A549 (cell line): ENCODE measurements at regions of chr17 and their contacts with region 1.

Region 1: GRCh38 chr17:4004517-4005295 is 40.5 kb upstream of the ATP2A3 start:
- DNase-seq: peak; percentile 56 to 81
- ATAC-seq: peak; percentile 64 to 85; a peak in 5 of 6 replicates
- H3K4me3 ChIP-seq: no peak overlapping the region
- H3K27ac ChIP-seq: no peak overlapping the region
- H3K4me1 ChIP-seq: peaks cover 23% of the 10 kb centered on the region
- CTCF ChIP-seq: peak; percentile 95
- EP300 ChIP-seq: no peak
- POLR2A ChIP-seq: no peak
- RAD21 ChIP-seq: peak; percentile 89

Region 2: DNA sequence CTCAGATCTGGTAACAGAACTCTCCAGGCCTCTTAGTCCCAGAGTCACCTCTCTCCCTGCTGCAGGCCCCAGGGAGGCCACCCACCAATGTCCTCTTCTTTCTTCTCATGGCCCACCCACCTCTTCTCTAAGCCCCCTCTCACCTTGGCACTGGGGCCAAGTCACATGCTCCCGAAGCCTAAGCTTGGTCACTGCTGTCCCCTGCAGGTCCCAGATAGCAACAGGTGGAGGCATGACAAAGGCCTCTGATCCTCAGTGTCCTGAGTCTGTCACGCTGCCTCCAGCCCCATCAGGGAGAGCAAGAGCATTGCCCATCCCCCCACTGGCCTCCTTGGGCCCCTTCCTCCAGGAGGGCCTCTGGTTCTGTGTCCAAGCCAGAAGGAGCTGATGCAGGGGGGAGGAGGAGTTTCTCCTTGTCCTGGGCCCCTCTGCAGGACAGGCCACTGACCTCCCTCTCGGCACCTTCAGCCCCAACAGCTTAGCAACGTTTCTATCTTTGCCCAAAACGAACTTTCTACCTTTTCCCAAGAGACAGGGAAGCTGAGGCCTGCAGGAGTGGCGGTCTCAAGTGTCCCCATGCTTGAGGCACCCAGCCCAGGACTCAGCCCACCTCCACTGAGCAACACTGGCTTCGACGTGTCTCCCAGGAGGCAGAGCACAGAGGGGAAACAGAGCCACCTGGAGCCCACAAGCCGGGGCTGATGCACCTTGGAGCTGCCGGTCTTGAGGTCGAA is 97.1 kb before region 1 on chr17:
- CTCF ChIA-PET with region 1: interaction called, 166 read pairs
- POLR2A ChIA-PET with region 1: no interaction called
- DNase-seq: peak in 1 of 2 experiments; percentile 40
- ATAC-seq: peak; percentile 37 to 48; a peak in 4 of 6 replicates
- H3K4me3 ChIP-seq: no peak overlapping the region
- H3K27ac ChIP-seq: no peak overlapping the region
- H3K4me1 ChIP-seq: no peaks in the 10 kb centered on the region
- CTCF ChIP-seq: peak; percentile 52
- EP300 ChIP-seq: no peak
- POLR2A ChIP-seq: no peak
- RAD21 ChIP-seq: peak; percentile 72 to 83

Region 3: GRCh38 chr17:3946711-3947235 is 57.9 kb before region 1 on chr17:
- CTCF ChIA-PET with region 1: interaction called, 12 read pairs
- POLR2A ChIA-PET with region 1: no interaction called
- DNase-seq: no peak
- ATAC-seq: peak in 1 of 2 experiments; percentile 10; a peak in 1 of 6 replicates
- H3K4me3 ChIP-seq: no peak overlapping the region
- H3K27ac ChIP-seq: no peak overlapping the region
- H3K4me1 ChIP-seq: no peaks in the 10 kb centered on the region
- CTCF ChIP-seq: no peak
- EP300 ChIP-seq: no peak
- POLR2A ChIP-seq: no peak
- RAD21 ChIP-seq: no peak

Region 4: DNA sequence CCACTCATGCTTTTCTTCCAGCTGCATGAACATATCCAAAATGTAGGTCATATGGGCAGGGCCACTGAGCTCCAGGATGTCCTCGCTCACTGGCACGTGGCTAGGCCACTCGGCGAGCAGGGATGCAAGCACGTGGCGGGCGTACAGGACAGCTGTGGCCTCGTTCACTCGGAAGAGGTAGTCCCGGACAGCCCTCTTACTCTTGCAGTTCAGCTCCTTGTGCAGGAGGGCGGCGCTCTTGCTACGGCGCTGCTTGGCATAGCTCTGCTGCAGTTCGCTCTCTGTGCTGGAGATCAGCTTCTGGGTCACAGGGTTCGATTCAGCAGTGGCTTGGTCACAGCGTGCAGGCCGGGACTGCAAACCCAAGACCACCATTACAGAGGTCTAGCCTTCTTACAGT is 12.7 kb after region 1 on chr17:
- CTCF ChIA-PET with region 1: interaction called, 55 read pairs
- POLR2A ChIA-PET with region 1: interaction called, 3 read pairs
- DNase-seq: no peak
- ATAC-seq: peak; percentile 5 to 42; a peak in 3 of 6 replicates
- H3K4me3 ChIP-seq: no peak overlapping the region
- H3K27ac ChIP-seq: no peak overlapping the region
- H3K4me1 ChIP-seq: no peaks in the 10 kb centered on the region
- CTCF ChIP-seq: peak; percentile 25; the same call in 1 of the 3 replicates
- EP300 ChIP-seq: no peak
- POLR2A ChIP-seq: no peak
- RAD21 ChIP-seq: no peak

Region 5: DNA sequence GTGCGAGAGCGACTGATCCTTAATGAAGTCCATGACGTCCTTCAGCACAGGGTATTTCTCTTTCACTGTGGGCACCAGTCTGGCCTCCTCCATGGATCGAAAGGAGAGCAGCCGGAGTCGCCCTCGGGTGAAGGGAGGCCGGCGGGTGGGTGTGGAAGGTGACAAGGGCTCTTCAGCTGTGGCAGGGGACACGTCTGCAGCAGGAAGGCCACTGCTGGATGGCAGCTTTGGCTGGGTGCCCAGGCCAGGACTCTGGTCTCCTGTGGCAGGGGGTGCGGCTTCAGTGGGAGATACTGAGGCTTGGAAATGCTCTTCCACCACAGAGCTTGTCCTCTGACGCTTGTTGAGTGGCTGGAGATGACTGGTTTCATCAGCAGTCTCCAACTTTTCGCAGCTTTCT is 59.7 kb after region 1 on chr17:
- CTCF ChIA-PET with region 1: no interaction called
- POLR2A ChIA-PET with region 1: no interaction called
- DNase-seq: no peak
- ATAC-seq: no peak
- H3K4me3 ChIP-seq: no peak overlapping the region
- H3K27ac ChIP-seq: no peak overlapping the region
- H3K4me1 ChIP-seq: no peaks in the 10 kb centered on the region
- CTCF ChIP-seq: no peak
- EP300 ChIP-seq: no peak
- POLR2A ChIP-seq: no peak
- RAD21 ChIP-seq: no peak

Region 6: GRCh38 chr17:4074831-4075495 is 70.3 kb after region 1 on chr17:
- CTCF ChIA-PET with region 1: interaction called, 11 read pairs
- POLR2A ChIA-PET with region 1: no interaction called
- DNase-seq: peak; percentile 56 to 66
- ATAC-seq: peak; percentile 86 to 89
- H3K4me3 ChIP-seq: no peak overlapping the region
- H3K27ac ChIP-seq: no peak overlapping the region
- H3K4me1 ChIP-seq: no peaks in the 10 kb centered on the region
- CTCF ChIP-seq: peak; percentile 69
- EP300 ChIP-seq: no peak
- POLR2A ChIP-seq: no peak
- RAD21 ChIP-seq: peak; percentile 66 to 75